Activated T-helper 1 cell treated with anti-CD3 and anti-CD28 coated beads, Interleukin-12 subunit alpha, Interleukin-12 subunit beta, Interleukin-2, Interleukin-4 antibody, amounts not matched to agents 30 ng/mL and 10 ng/mL and 1 ng/mL, durations not matched to agents 14 hours and 24 hours and 36 hours (primary cell): ENCODE measurements at regions of chr3 and their contacts with region 1.

Region 1: DNA sequence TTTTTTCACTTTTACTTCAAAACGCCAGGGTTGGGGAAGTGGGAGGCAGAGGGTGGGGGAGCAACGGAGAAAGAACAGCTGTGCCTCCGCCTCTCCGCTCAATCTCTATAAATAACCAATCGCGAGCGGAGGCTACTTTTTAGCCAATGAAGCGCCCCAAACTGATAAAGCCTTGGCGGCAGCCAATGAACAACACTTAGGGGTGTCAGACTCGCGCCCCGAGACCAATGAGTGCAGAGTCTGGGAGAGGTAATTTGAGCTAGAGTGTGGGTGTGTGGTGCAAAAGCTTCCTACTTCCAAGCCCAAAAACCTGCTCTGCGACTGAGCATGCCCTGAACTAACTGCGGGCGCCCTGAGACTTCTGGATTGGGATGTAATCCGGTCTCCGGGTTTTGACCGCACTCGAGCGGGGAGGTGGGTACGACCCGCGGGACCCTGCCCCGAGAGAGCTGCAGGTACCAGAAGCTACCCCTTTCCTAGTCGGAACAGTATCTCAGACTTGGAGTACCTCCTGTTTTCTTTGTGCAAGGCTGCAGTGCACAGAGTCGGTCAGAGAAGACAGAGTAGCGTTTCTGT is 800 bp upstream of the RAP2B start:
- DNase-seq: peak; percentile 91
- H3K4me3 Mint-ChIP-seq: peak overlapping the region; percentile 90
- H3K27ac Mint-ChIP-seq: peak overlapping the region; percentile 97
- H3K4me1 Mint-ChIP-seq: peaks cover 47% of the 10 kb centered on the region
- H3K27me3 Mint-ChIP-seq: no peaks in the 10 kb centered on the region

Region 2: GRCh38 chr3:152646004-152646403 is 515.2 kb before region 1 on chr3:
- intact Hi-C with region 1: no loop called
- DNase-seq: no peak
- H3K4me3 Mint-ChIP-seq: no peak overlapping the region
- H3K27ac Mint-ChIP-seq: no peak overlapping the region
- H3K4me1 Mint-ChIP-seq: no peaks in the 10 kb centered on the region
- H3K27me3 Mint-ChIP-seq: peaks cover 4% of the 10 kb centered on the region

Region 3: DNA sequence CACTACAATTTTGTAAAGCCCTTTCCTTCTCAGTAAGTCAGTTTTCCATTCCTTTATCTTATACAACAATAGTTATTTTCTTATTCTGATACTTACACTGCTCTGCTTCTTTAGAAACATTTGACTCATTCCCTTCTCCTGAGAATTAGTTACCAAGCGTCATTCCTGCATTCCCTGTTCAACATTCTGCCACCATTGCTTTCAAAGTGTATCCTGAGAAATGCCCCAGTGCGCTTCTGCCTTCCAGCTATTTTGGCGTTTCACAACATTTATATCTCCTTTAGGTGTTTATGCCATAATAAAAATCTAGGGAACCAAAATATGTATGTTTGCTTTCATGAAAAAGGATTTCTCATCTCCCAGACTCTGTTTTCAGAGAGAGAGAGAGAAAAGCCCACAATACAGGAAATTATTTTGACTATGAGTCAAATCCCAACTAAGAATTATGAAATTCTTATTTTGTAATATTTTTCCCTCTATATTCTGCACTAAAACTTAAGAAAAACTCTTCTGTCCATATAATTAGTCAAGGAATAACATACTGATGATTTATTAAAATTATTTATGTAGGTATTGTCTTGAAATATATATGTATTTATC is 117.4 kb before region 1 on chr3:
- intact Hi-C with region 1: loop called (anchors 1 kb)
- DNase-seq: no peak
- H3K4me3 Mint-ChIP-seq: no peak overlapping the region
- H3K27ac Mint-ChIP-seq: no peak overlapping the region
- H3K4me1 Mint-ChIP-seq: peaks cover 12% of the 10 kb centered on the region
- H3K27me3 Mint-ChIP-seq: no peaks in the 10 kb centered on the region

Region 4: DNA sequence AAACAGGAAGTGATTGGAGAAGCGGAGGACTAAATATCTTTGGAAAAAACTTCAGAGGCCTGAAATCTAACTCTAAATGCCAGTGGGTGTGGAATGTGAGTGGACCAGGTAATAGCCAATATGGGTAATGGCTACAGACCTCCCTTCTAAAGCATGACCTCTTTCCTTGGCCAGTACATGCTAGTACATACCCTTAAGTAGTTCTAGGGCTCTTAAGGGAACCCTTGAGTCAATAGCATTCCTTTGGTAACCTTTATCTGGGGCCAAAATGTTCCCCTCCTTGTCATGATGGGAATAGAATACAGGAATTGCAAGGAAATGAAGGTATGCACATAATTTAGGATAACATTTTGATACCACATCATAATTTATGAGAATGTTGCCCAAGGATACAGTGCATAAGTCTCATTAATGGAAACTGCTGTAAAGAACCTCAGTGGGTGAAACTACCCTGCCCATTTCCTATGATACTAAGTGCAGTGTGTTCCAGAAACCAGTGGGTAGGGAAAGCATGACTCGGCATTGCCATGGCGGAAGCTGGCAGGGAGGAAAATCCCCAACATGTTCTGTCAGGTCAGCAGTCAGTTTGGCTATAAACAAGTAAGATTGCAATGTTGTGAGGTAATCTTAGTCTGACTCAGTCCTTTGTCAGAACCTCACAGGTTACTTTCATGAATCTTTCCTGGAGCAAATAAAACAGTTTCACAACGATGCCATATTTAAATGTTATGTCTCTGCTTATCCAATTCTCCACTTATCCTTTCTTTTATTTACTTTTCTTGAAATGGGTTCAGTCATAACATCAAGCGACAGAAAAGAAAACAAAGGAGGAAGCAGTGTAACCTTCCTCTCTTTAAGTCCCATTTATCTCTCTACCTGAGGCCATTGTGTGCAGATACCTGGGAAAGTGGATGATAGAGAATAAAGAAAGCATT is 22.7 kb before region 1 on chr3:
- intact Hi-C with region 1: loop called (anchors 1 kb)
- DNase-seq: peak; percentile 48
- H3K4me3 Mint-ChIP-seq: peak overlapping the region; percentile 48
- H3K27ac Mint-ChIP-seq: peak overlapping the region; percentile 87
- H3K4me1 Mint-ChIP-seq: peaks cover 33% of the 10 kb centered on the region
- H3K27me3 Mint-ChIP-seq: peaks cover 4% of the 10 kb centered on the region

Region 5: GRCh38 chr3:153284282-153284938 is 123.2 kb after region 1 on chr3:
- intact Hi-C with region 1: loop called (anchors 2 kb)
- DNase-seq: no peak
- H3K4me3 Mint-ChIP-seq: no peak overlapping the region
- H3K27ac Mint-ChIP-seq: peak overlapping the region; percentile 36
- H3K4me1 Mint-ChIP-seq: peaks cover 40% of the 10 kb centered on the region
- H3K27me3 Mint-ChIP-seq: no peaks in the 10 kb centered on the region

Region 6: DNA sequence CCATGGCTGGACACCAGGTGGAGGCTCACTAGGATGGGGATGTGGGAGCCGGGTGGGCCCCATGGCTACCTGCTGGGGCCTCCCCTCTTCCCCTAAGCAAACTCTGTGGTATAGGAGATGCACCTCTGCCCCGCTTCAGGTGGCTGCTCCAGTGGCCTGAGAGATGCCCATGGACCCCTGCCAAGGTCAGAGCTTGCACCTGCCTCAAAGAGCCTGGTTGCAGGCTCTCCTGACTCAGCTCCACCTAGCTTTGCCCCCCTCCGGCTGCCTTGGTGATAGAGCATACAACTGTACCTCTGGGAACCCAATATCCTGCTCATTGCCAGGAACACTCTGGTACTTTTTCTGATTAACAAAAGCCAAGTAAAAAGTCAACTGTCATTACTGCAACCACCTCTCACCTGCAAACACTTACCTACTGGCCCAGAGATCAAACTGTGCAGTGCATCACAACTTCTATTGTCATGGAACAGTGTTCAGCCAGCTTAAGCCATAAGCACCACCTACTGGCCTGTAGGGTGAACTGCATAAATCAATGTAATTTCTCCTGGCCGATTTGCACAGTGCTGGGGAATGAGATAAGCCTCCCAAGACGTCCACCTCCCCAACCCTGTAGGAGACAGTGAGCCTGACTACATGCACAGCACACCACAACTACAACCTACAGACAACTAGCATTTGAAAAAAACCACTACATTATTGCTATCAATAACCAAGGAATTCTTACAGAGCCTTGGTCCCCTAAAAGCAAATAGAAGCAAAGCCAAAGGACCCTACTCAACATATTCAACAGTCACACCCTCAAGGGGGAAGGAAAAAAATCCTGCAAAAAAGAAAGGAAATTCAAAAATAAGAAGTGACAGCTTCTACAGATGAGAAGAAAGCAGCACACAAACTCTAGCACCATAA is 607.6 kb after region 1 on chr3:
- intact Hi-C with region 1: loop called (anchors 1 kb)
- DNase-seq: peak; percentile 35
- H3K4me3 Mint-ChIP-seq: no peak overlapping the region
- H3K27ac Mint-ChIP-seq: no peak overlapping the region
- H3K4me1 Mint-ChIP-seq: no peaks in the 10 kb centered on the region
- H3K27me3 Mint-ChIP-seq: peaks cover 17% of the 10 kb centered on the region